ENCODE measurements at regions of chrX and their contacts with region 1.

Region 1: GRCh38 chrX:40175511-40176350 is 78.0 kb upstream of the BCOR start:
- DNase-seq: peak in 1 of 2 donors; percentile 50
- ATAC-seq: peak; percentile 47 to 53
- H3K4me3 ChIP-seq: peak overlapping the region; percentile 62 to 70 (median 66)
- H3K27ac ChIP-seq: peak overlapping the region; percentile 82 to 89 (median 85)
- H3K4me1 ChIP-seq: peaks cover 2 to 21% of the 10 kb centered on the region in 2 donors
- H3K27me3 ChIP-seq: peaks cover 0 to 40% (median 23%) of the 10 kb centered on the region in 3 donors
- CTCF ChIP-seq: no peak
- POLR2A ChIP-seq: peak in 1 of 2 donors; percentile 21

Region 2: GRCh38 chrX:40006106-40007017 is 169.4 kb before region 1 on chrX:
- in situ Hi-C with region 1: loop called in 1 of 4 experiments (anchors 25 kb)
- intact Hi-C with region 1: loop called (anchors 2 kb)
- DNase-seq: peak in 1 of 2 donors; percentile 21
- ATAC-seq: peak in 1 of 2 donors; percentile 56
- H3K4me3 ChIP-seq: peak overlapping the region in 2 of 4 donors; percentile 9 to 10
- H3K27ac ChIP-seq: peak overlapping the region in 1 of 4 donors; percentile 25
- H3K4me1 ChIP-seq: peaks cover 0 to 2% of the 10 kb centered on the region in 2 donors
- H3K27me3 ChIP-seq: peaks cover 0 to 33% (median 28%) of the 10 kb centered on the region in 3 donors
- CTCF ChIP-seq: peak in 1 of 5 experiments; percentile 6
- POLR2A ChIP-seq: no peak